Endothelial cell of umbilical vein (primary cell): ENCODE measurements at regions of chr7 and their contacts with region 1.

Region 1: GRCh38 chr7:73865738-73866445 is 4.9 kb downstream of the TMEM270 start:
- DNase-seq: peak; percentile 62
- H3K4me3 ChIP-seq: no peak overlapping the region
- H3K27ac ChIP-seq: no peak overlapping the region
- H3K4me1 ChIP-seq: no peaks in the 10 kb centered on the region
- H3K27me3 ChIP-seq: no peaks in the 10 kb centered on the region
- CTCF ChIP-seq: peak; percentile 61 to 77
- POLR2A ChIP-seq: no peak

Region 2: DNA sequence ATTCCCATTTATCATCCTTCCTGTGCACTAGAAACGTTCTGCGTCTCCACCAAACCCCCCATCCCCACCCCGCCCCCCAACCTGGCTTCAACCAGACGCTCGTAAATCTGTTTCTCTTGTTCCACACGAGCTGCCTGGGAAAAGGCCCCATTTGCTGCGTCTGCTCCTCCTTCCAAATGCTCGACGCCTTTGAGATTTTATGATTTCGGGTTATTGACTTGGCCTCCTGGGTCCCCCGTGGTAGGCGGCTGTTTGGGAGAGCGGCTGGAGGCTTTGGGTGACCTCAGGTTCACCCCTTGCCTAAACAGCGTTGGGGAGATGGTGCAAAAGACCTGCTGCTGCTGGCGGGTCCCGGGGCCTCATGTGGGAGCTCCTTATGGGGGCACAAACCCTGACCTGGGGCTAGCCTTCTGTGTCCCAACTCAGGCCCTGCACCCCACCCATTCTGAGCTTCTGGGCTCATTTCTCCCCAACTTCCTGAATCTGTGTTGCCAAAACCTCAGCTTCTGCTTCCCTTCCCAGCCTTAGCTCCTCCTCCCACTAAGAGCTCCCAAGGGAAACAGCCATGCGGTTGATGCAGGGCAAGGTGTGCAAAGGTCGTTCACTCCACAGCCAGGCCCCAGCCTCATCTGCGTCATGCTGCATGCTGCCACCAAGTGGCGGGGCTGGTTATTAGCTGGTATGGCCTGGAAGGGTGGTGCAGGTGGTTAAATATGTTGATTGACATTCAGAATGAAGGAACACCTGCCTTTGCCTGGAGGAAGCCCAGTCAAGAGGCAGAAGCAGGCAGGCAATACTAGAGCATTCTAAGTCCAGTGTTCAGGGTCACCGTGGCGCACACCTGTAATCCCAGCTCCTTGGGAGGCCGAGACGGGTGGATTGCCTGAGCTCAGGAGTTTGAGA is 113.0 kb after region 1 on chr7:
- CTCF ChIA-PET with region 1: interaction called, 11 read pairs
- POLR2A ChIA-PET with region 1: no interaction called
- dilution Hi-C with region 1: no loop called
- intact Hi-C with region 1: loop called (anchors 1 kb)
- DNase-seq: peak; percentile 24
- H3K4me3 ChIP-seq: no peak overlapping the region
- H3K27ac ChIP-seq: no peak overlapping the region
- H3K4me1 ChIP-seq: no peaks in the 10 kb centered on the region
- H3K27me3 ChIP-seq: no peaks in the 10 kb centered on the region
- CTCF ChIP-seq: peak; percentile 31 to 50
- POLR2A ChIP-seq: no peak